Activated CD4-positive, alpha-beta T cell treated with anti-CD3 and anti-CD28 coated beads for 36 hours (primary cell): ENCODE measurements at regions of chr6 and their contacts with region 1.

Region 1: GRCh38 chr6:30533460-30534294 is 22.6 kb downstream of the GNL1 start:
- DNase-seq: no peak
- ATAC-seq: no peak
- H3K4me3 Mint-ChIP-seq: peak overlapping the region; percentile 63
- H3K27ac Mint-ChIP-seq: peak overlapping the region; percentile 92
- H3K4me1 Mint-ChIP-seq: peaks cover 58% of the 10 kb centered on the region
- H3K27me3 Mint-ChIP-seq: no peaks in the 10 kb centered on the region

Region 2: GRCh38 chr6:30319146-30319835 is 214.4 kb before region 1 on chr6:
- CTCF ChIA-PET with region 1: no interaction called
- POLR2A ChIA-PET with region 1: no interaction called
- intact Hi-C with region 1: no loop called
- DNase-seq: no peak
- ATAC-seq: no peak
- H3K4me3 Mint-ChIP-seq: no peak overlapping the region
- H3K27ac Mint-ChIP-seq: peak overlapping the region; percentile 61
- H3K4me1 Mint-ChIP-seq: peaks cover 70% of the 10 kb centered on the region
- H3K27me3 Mint-ChIP-seq: no peaks in the 10 kb centered on the region

Region 3: DNA sequence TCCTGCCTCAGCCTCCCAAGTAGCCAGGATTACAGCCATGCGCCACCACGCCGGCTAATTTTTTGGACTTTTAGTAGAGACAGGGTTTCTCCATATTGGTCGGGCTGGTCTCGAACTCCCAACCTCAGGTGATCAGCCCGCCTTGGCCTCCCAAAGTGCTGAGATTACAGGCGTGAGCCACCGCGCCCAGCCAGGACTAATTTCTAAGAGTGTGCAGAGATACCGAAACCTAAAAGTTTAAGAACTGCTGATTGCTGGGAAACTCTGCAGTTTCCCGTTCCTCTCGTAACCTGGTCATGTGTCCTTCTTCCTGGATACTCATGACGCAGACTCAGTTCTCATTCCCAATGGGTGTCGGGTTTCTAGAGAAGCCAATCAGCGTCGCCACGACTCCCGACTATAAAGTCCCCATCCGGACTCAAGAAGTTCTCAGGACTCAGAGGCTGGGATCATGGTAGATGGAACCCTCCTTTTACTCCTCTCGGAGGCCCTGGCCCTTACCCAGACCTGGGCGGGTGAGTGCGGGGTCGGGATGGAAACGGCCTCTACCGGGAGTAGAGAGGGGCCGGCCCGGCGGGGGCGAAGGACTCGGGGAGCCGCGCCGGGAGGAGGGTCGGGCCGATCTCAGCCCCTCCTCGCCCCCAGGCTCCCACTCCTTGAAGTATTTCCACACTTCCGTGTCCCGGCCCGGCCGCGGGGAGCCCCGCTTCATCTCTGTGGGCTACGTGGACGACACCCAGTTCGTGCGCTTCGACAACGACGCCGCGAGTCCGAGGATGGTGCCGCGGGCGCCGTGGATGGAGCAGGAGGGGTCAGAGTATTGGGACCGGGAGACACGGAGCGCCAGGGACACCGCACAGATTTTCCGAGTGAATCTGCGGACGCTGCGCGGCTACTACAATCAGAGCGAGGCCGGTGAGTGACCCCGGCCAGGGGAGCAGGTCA is 44.3 kb before region 1 on chr6 and contains the start of gene HLA-E:
- CTCF ChIA-PET with region 1: interaction called, 386 read pairs
- POLR2A ChIA-PET with region 1: interaction called, 45 read pairs
- intact Hi-C with region 1: loop called (anchors 1 kb)
- DNase-seq: peak; percentile 92
- ATAC-seq: peak; percentile 78
- H3K4me3 Mint-ChIP-seq: peak within 1 kb of the TSS; percentile 95
- H3K27ac Mint-ChIP-seq: peak within 1 kb of the TSS; percentile 98
- H3K4me1 Mint-ChIP-seq: peaks cover 43% of the 10 kb centered on the region
- H3K27me3 Mint-ChIP-seq: no peaks in the 10 kb centered on the region
- total RNA-seq, gene HLA-E: 451 to 502 TPM

Region 4: GRCh38 chr6:30508890-30509736 is 24.6 kb before region 1 on chr6:
- CTCF ChIA-PET with region 1: interaction called, 89 read pairs
- POLR2A ChIA-PET with region 1: interaction called, 6 read pairs
- intact Hi-C with region 1: loop called in 1 of 2 experiments (anchors 2 kb)
- DNase-seq: peak; percentile 37
- ATAC-seq: peak; percentile 71
- H3K4me3 Mint-ChIP-seq: peak overlapping the region; percentile 51
- H3K27ac Mint-ChIP-seq: peak overlapping the region; percentile 94
- H3K4me1 Mint-ChIP-seq: peaks cover 60% of the 10 kb centered on the region
- H3K27me3 Mint-ChIP-seq: no peaks in the 10 kb centered on the region

Region 5: DNA sequence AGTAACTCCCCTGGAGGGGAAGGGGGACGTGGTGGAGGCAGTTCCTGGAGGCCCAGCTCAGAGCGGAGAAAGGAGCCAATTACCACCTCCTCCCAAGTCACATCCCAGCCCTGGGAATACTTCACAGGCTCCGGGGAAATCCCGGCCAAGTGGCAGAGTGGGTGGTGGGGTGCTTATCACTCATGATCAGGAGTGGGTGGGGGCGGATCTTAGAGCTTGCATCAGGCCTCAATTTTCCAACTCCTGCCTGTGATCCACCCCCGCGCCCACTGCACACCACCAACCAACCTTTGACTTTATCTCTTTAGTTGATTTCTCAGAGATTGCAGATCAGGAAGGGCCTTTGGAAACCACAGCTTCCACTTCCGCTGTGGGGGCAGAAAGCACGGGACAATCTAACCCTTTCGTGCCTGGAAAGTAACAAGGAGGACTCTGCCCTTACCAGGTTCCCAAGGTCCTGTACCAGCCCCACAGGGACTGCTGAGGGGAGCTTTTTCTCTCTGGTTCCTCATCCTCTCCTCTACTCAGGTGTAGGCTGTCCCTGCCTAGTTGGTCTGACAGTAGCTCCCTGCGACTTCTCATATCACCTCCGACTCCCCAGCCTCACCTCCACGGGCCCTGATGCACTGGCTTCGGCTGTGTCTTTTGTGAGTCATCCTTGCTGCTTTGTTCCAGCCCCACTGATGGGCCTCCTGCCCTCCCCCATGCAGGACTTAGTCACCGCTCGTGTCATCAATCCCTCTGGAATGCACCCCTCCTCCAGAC is 235.6 kb after region 1 on chr6:
- CTCF ChIA-PET with region 1: interaction called, 3 read pairs
- POLR2A ChIA-PET with region 1: no interaction called
- intact Hi-C with region 1: loop called in 1 of 2 experiments (anchors 1 kb)
- DNase-seq: peak; percentile 90
- ATAC-seq: peak; percentile 75
- H3K4me3 Mint-ChIP-seq: peak overlapping the region; percentile 63
- H3K27ac Mint-ChIP-seq: peak overlapping the region; percentile 98
- H3K4me1 Mint-ChIP-seq: peaks cover 86% of the 10 kb centered on the region
- H3K27me3 Mint-ChIP-seq: no peaks in the 10 kb centered on the region

Region 6: GRCh38 chr6:30814136-30815040 is 280.7 kb after region 1 on chr6:
- CTCF ChIA-PET with region 1: no interaction called
- POLR2A ChIA-PET with region 1: no interaction called
- intact Hi-C with region 1: loop called (anchors 1 to 5 kb)
- DNase-seq: peak; percentile 79
- ATAC-seq: peak; percentile 40
- H3K4me3 Mint-ChIP-seq: peak overlapping the region; percentile 38
- H3K27ac Mint-ChIP-seq: peak overlapping the region; percentile 96
- H3K4me1 Mint-ChIP-seq: peaks cover 91% of the 10 kb centered on the region
- H3K27me3 Mint-ChIP-seq: no peaks in the 10 kb centered on the region

Region 7: DNA sequence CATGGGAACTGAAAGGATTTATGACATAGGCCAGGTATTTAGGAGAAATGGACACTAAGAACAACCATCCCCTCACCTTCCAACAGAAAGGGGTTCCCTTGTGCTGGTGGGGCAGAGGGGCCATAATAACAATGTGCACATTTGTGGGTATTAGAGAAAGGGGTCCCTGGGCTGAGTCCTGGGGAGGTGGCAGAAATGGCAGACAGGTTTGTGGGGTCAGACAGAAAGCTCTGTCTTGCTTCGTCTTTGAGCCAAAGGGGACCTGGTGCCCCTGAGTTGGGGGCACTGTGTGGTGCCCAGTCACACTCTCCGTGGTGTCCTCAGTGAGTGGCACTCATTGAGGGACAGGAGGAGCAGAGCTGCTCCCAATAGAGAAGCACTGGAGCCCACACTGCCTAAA is 297.7 kb after region 1 on chr6:
- CTCF ChIA-PET with region 1: no interaction called
- POLR2A ChIA-PET with region 1: no interaction called
- intact Hi-C with region 1: no loop called
- DNase-seq: no peak
- ATAC-seq: no peak
- H3K4me3 Mint-ChIP-seq: no peak overlapping the region
- H3K27ac Mint-ChIP-seq: peak overlapping the region; percentile 97
- H3K4me1 Mint-ChIP-seq: peaks cover 63% of the 10 kb centered on the region
- H3K27me3 Mint-ChIP-seq: no peaks in the 10 kb centered on the region